CD4-positive, alpha-beta memory T cell (primary cell): ENCODE measurements at regions of chr4 and their contacts with region 1.

Region 1: GRCh38 chr4:102578819-102579218 is 77.7 kb downstream of the NFKB1 start:
- DNase-seq: peak in 2 of 5 donors; percentile 22 to 23
- H3K4me3 ChIP-seq: no peak overlapping the region
- H3K4me3 Mint-ChIP-seq: no peak overlapping the region
- H3K27ac ChIP-seq: no peak overlapping the region
- H3K27ac Mint-ChIP-seq: peak overlapping the region; percentile 31 to 77 (median 66)
- H3K4me1 ChIP-seq: peaks cover 42% of the 10 kb centered on the region
- H3K4me1 Mint-ChIP-seq: peaks cover 56 to 82% (median 63%) of the 10 kb centered on the region in 4 donors
- H3K27me3 ChIP-seq: no peaks in the 10 kb centered on the region
- H3K27me3 Mint-ChIP-seq: no peaks in the 10 kb centered on the region

Region 2: DNA sequence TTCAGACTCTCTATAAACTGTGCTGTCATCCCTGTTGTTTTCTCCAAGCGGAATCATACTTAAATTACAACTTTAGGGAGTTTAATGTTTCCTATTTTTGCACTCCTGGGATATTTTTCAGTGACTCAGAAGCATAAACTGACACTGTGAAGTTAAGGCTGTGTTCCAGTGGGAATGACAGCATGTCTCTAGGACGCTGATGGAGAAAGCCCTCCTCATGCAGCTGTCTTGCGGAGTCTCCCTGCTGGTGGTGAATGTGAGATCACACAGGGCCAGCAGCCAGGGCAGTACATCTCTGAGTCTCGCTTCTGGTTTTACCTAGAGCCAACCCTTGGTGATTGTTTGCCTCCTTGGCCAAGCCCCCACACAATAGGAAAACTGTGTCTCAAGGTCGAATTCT is 24.3 kb before region 1 on chr4:
- CTCF ChIA-PET with region 1: interaction called, 4 read pairs
- POLR2A ChIA-PET with region 1: interaction called, 6 read pairs
- intact Hi-C with region 1: loop called (anchors 2 kb)
- DNase-seq: no peak
- H3K4me3 ChIP-seq: no peak overlapping the region
- H3K4me3 Mint-ChIP-seq: peak overlapping the region in 1 of 8 donors; percentile 15
- H3K27ac ChIP-seq: no peak overlapping the region
- H3K27ac Mint-ChIP-seq: peak overlapping the region in 5 of 7 donors; percentile 10 to 70 (median 52)
- H3K4me1 ChIP-seq: peaks cover 82% of the 10 kb centered on the region
- H3K4me1 Mint-ChIP-seq: peaks cover 40 to 52% (median 46%) of the 10 kb centered on the region in 4 donors
- H3K27me3 ChIP-seq: no peaks in the 10 kb centered on the region
- H3K27me3 Mint-ChIP-seq: no peaks in the 10 kb centered on the region

Region 3: GRCh38 chr4:102598086-102598761 is 19.4 kb after region 1 on chr4:
- CTCF ChIA-PET with region 1: interaction called, 4 read pairs
- POLR2A ChIA-PET with region 1: interaction called, 4 read pairs
- intact Hi-C with region 1: loop called (anchors 2 kb)
- DNase-seq: peak; percentile 62 to 83 (median 78)
- H3K4me3 ChIP-seq: no peak overlapping the region
- H3K4me3 Mint-ChIP-seq: peak overlapping the region; percentile 46 to 82 (median 68)
- H3K27ac ChIP-seq: peak overlapping the region; percentile 57
- H3K27ac Mint-ChIP-seq: peak overlapping the region; percentile 87 to 99 (median 92)
- H3K4me1 ChIP-seq: peaks cover 73% of the 10 kb centered on the region
- H3K4me1 Mint-ChIP-seq: peaks cover 54 to 88% (median 69%) of the 10 kb centered on the region in 4 donors
- H3K27me3 ChIP-seq: no peaks in the 10 kb centered on the region
- H3K27me3 Mint-ChIP-seq: no peaks in the 10 kb centered on the region

Region 4: DNA sequence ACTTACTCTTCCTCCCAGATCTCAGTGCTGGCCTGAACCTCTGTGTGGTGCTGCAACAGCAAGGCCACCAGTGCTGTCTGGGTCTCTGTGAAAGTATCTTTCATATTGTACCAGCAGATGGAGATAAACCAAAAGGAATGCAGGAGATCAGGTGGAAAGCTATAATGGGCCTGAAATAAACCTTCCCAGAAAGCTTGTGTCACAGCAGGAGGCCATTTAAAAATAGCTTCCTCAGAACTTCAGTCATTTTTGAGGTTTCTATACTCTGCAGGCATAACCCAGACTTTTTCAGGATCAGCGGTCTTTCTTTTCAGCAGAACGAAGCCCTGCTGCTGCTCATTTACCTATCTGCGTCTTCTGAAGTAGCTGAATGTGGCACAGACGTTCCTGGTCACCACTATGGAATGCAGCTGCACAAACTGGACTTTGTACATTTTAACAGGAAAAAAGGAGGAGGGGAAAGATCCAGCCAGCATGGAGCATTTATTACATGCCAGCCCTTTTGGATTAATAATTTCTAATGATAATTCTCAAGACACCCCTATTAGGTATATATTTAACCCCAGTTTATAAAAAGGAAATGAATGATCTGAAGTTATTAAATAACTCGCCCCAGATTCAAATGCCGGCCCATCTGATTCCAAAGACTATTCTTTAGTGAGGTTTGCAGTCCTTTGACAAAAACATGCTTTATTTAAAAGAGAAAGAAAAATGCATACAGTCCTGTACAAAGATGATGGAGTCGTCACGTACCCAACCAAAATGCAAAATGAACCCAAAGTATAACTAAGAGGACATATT is 42.1 kb after region 1 on chr4:
- CTCF ChIA-PET with region 1: interaction called, 24 read pairs
- POLR2A ChIA-PET with region 1: interaction called, 3 read pairs
- intact Hi-C with region 1: loop called (anchors 1 kb)
- DNase-seq: peak in 2 of 5 donors; percentile 27 to 35
- H3K4me3 ChIP-seq: no peak overlapping the region
- H3K4me3 Mint-ChIP-seq: peak overlapping the region in 1 of 8 donors; percentile 40
- H3K27ac ChIP-seq: no peak overlapping the region
- H3K27ac Mint-ChIP-seq: peak overlapping the region in 5 of 7 donors; percentile 20 to 82 (median 80)
- H3K4me1 ChIP-seq: peaks cover 18% of the 10 kb centered on the region
- H3K4me1 Mint-ChIP-seq: peaks cover 19 to 70% (median 40%) of the 10 kb centered on the region in 4 donors
- H3K27me3 ChIP-seq: no peaks in the 10 kb centered on the region
- H3K27me3 Mint-ChIP-seq: no peaks in the 10 kb centered on the region

Region 5: DNA sequence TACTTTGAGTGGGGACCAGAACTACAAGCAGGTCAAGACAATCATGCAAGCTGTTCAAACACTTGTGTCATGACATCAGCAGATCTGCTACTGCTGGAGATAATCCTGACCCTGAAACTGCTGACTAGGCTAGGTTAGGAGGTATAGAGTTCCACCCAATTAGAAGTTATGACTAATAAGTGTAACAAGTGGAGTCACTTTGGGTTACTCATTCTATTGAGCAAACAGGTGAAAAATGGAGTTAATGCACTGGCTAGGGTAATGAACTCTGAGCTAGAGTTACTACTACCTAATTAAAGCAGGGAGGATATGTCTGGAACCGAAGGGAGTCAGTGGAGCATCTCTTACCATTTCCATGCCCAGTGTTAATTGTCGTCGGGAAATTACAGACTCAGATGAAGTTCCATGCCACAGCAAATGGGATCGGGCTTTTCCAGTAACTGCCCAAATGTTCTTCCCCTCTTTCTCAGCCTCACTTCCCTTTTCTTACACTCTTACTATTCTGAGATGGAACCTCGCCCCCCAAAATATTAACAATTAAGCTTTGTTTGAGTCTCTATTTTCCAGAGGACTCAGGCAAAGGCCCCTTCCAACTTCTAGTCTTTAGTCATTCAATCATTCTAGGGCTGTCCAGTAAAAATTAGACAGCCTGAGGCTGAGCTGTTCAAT is 201.8 kb after region 1 on chr4:
- CTCF ChIA-PET with region 1: no interaction called
- POLR2A ChIA-PET with region 1: no interaction called
- intact Hi-C with region 1: no loop called
- DNase-seq: no peak
- H3K4me3 ChIP-seq: no peak overlapping the region
- H3K4me3 Mint-ChIP-seq: no peak overlapping the region
- H3K27ac ChIP-seq: no peak overlapping the region
- H3K27ac Mint-ChIP-seq: no peak overlapping the region
- H3K4me1 ChIP-seq: no peaks in the 10 kb centered on the region
- H3K4me1 Mint-ChIP-seq: no peaks in the 10 kb centered on the region
- H3K27me3 ChIP-seq: no peaks in the 10 kb centered on the region
- H3K27me3 Mint-ChIP-seq: peaks cover 3 to 6% of the 10 kb centered on the region in 2 donors